Naive thymus-derived CD4-positive, alpha-beta T cell (primary cell): ENCODE measurements at regions of chr2 and their contacts with region 1.

Region 1: GRCh38 chr2:38740851-38741731 is 10.1 kb downstream of the SRSF7 start:
- DNase-seq: peak in 7 of 9 donors; percentile 31 to 59 (median 53)
- ATAC-seq: peak; percentile 56
- H3K4me3 ChIP-seq: no peak overlapping the region
- H3K4me3 Mint-ChIP-seq: no peak overlapping the region
- H3K27ac ChIP-seq: no peak overlapping the region
- H3K27ac Mint-ChIP-seq: peak overlapping the region in 8 of 9 donors; percentile 3 to 83 (median 70)
- H3K4me1 ChIP-seq: peaks cover 10 to 11% of the 10 kb centered on the region in 2 donors
- H3K4me1 Mint-ChIP-seq: peaks cover 20 to 57% (median 36%) of the 10 kb centered on the region in 7 donors
- H3K27me3 ChIP-seq: no peaks in the 10 kb centered on the region
- H3K27me3 Mint-ChIP-seq: no peaks in the 10 kb centered on the region

Region 2: DNA sequence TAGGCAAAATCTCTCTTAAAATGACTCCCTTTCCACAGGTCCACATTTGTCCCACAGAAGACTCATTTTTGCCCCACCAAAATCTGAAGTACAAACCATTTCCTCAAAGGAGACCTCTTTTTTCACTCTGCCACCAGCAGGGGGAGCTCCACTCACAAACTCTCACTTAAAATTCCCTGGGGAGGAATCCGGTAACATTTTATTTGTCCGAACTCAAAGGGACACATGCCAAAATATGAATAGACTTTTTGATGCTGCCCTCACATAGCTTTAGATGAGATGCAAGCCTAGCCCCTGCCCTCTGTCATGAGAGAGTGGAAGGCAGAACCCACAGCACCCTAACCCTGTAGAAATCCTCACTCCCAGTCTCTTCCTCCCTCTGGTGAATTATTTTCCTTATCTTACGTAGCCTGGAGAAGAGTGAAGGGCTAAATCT is 758.9 kb before region 1 on chr2:
- CTCF ChIA-PET with region 1: no interaction called
- POLR2A ChIA-PET with region 1: no interaction called
- intact Hi-C with region 1: loop called in 1 of 2 experiments (anchors 1 kb)
- DNase-seq: peak in 7 of 9 donors; percentile 33 to 61 (median 39)
- ATAC-seq: peak; percentile 52
- H3K4me3 ChIP-seq: no peak overlapping the region
- H3K4me3 Mint-ChIP-seq: peak overlapping the region in 1 of 10 donors; percentile 14
- H3K27ac ChIP-seq: no peak overlapping the region
- H3K27ac Mint-ChIP-seq: no peak overlapping the region
- H3K4me1 ChIP-seq: no peaks in the 10 kb centered on the region
- H3K4me1 Mint-ChIP-seq: peaks cover 0 to 8% (median 6%) of the 10 kb centered on the region in 7 donors
- H3K27me3 ChIP-seq: no peaks in the 10 kb centered on the region
- H3K27me3 Mint-ChIP-seq: peaks cover 0 to 14% (median 0%) of the 10 kb centered on the region in 5 donors

Region 3: DNA sequence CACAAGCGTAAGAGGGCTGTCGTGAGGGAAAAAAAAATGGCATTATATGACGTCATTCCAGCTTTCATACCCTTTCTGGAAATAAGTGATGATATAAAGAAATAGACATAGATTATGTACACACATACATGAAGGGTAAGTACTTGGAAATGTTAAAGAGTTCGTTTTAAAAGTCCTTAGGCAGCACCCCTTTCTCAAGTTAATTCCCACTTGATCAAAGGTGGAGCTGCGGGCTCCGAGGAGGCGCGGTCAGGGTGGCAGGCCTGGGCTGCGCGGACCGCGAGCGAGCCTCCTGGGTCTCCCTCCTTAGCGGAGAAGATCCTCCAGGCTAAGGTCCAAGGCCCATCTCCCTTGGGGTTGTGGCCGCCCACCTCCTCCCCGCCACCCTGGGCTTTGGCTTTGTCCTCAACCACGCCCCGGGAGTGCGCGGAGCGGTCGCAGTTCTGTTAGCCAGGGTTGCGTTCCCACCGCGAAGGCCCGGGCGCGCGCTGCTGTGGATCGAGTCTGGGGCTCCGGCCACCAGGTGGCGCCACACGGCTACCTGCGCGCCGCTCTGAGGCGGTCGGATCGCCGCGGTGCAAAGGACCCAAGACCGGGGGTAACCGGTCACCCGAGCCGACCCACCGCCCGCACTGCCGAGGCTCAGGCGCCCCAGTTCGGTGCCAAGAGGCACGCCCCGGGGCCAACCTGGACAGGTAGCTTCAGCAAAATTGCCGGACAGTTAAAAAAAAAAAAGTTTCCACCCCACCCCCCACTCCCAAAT is 205.2 kb before region 1 on chr2:
- CTCF ChIA-PET with region 1: interaction called, 9 read pairs
- POLR2A ChIA-PET with region 1: interaction called, 3 read pairs
- intact Hi-C with region 1: loop called (anchors 1 kb)
- DNase-seq: peak; percentile 48 to 88 (median 72)
- ATAC-seq: peak; percentile 95
- H3K4me3 ChIP-seq: peak overlapping the region; percentile 40
- H3K4me3 Mint-ChIP-seq: peak overlapping the region; percentile 36 to 72 (median 56)
- H3K27ac ChIP-seq: no peak overlapping the region
- H3K27ac Mint-ChIP-seq: peak overlapping the region in 1 of 9 donors; percentile 59
- H3K4me1 ChIP-seq: peaks cover 0 to 5% of the 10 kb centered on the region in 2 donors
- H3K4me1 Mint-ChIP-seq: peaks cover 0 to 6% (median 3%) of the 10 kb centered on the region in 7 donors
- H3K27me3 ChIP-seq: peaks cover 0 to 4% of the 10 kb centered on the region in 2 donors
- H3K27me3 Mint-ChIP-seq: peaks cover 4 to 37% (median 8%) of the 10 kb centered on the region in 5 donors

Region 4: DNA sequence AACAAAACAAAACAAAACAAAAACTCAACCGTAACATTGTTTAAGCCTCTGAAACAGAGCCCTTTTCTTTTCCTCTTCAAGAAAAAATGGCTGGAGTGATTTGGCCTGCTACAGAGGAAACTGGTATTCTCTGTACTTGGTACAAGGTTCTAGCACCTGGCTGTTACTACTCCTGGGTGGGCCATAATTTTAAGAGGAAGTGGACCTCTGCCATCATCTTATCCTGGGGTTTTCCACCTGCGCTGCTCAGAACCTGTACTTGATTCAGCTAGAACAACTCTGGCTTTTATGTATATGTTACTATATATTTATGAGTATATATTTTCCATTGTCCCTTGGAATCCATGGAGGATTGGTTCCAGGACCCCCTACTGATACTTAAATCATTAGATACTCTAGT is 12.4 kb before region 1 on chr2:
- CTCF ChIA-PET with region 1: interaction called, 8 read pairs
- POLR2A ChIA-PET with region 1: interaction called, 4 read pairs
- intact Hi-C with region 1: loop called in 1 of 2 experiments (anchors 1 kb)
- DNase-seq: no peak
- ATAC-seq: no peak
- H3K4me3 ChIP-seq: no peak overlapping the region
- H3K4me3 Mint-ChIP-seq: no peak overlapping the region
- H3K27ac ChIP-seq: no peak overlapping the region
- H3K27ac Mint-ChIP-seq: no peak overlapping the region
- H3K4me1 ChIP-seq: peaks cover 0 to 3% of the 10 kb centered on the region in 2 donors
- H3K4me1 Mint-ChIP-seq: peaks cover 0 to 26% (median 4%) of the 10 kb centered on the region in 7 donors
- H3K27me3 ChIP-seq: no peaks in the 10 kb centered on the region
- H3K27me3 Mint-ChIP-seq: no peaks in the 10 kb centered on the region

Region 5: DNA sequence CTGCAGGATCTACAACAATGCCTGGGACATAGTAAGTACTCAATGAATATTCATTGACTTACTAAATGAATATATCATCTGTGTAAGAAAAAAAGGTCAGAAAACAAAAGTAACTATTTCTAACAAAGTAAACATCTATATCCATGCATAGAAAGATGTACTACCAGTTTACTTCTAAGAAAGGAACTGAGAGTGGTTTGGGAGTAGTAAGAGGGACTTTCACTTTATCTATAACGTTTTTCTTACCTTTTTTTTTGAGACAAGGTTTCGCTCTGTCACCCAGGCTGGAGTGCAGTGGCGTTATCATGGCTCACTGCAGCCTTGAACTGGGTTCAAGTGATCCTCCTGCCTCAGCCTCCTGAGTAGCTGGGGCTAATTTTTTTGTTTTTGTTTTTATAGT is 109.0 kb after region 1 on chr2:
- CTCF ChIA-PET with region 1: no interaction called
- POLR2A ChIA-PET with region 1: no interaction called
- intact Hi-C with region 1: no loop called
- DNase-seq: no peak
- ATAC-seq: no peak
- H3K4me3 ChIP-seq: no peak overlapping the region
- H3K4me3 Mint-ChIP-seq: no peak overlapping the region
- H3K27ac ChIP-seq: no peak overlapping the region
- H3K27ac Mint-ChIP-seq: no peak overlapping the region
- H3K4me1 ChIP-seq: no peaks in the 10 kb centered on the region
- H3K4me1 Mint-ChIP-seq: peaks cover 0 to 3% (median 0%) of the 10 kb centered on the region in 7 donors
- H3K27me3 ChIP-seq: no peaks in the 10 kb centered on the region
- H3K27me3 Mint-ChIP-seq: no peaks in the 10 kb centered on the region